ENCODE measurements at regions of chr7 and their contacts with region 1.

Region 1: DNA sequence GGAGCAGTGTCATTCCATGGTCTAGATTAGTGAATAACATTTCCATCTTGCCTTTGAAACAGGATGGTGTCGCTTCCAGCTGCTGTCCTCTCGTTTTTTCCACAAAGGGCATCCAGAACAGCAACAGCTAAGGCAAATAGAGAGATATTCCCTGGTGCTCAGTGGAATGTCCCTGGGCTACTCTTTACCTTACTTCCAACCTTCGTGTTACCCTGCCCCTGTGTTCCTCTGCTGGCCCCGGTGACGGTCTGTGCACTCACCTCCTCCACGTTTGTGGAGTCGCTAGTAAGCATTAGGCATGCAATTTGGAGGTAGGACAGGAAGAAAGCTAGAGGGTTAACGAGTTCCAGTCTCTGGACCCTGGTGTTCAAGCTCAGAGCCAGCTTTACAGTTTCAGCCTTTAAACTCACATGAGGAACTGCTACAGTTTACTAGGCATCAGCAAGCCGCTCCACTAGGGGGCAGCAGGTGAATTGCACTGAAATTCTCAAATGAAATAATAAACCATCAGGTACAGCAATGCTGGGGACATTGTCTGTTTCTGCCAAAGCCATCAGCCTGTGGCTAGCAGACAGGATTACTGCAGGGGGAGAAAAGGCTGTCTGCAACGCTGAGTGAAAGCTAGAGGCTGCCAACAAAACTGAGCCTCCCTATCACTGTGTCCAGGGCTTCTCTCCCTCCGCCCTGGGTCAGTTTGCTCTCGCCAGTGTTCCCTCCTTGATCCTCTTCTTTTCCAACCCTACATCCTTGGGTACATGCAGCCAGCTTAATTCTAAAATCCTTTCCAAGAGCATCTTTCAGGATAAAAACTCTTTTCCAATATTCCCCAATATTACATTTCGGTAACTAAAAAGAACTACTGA is 9.0 kb downstream of the MRPL32 start:
- DNase-seq: peak; percentile 78 to 96 (median 83)
- H3K4me3 ChIP-seq: no peak overlapping the region
- H3K27ac ChIP-seq: no peak overlapping the region
- H3K4me1 ChIP-seq: no peaks in the 10 kb centered on the region
- H3K27me3 ChIP-seq: no peaks in the 10 kb centered on the region
- CTCF ChIP-seq: peak; percentile 84 to 92 (median 87)
- POLR2A ChIP-seq: no peak

Region 2: GRCh38 chr7:42605406-42606192 is 335.6 kb before region 1 on chr7:
- intact Hi-C with region 1: no loop called
- DNase-seq: no peak
- H3K4me3 ChIP-seq: no peak overlapping the region
- H3K27ac ChIP-seq: no peak overlapping the region
- H3K4me1 ChIP-seq: no peaks in the 10 kb centered on the region
- H3K27me3 ChIP-seq: no peaks in the 10 kb centered on the region
- CTCF ChIP-seq: no peak
- POLR2A ChIP-seq: no peak

Region 3: DNA sequence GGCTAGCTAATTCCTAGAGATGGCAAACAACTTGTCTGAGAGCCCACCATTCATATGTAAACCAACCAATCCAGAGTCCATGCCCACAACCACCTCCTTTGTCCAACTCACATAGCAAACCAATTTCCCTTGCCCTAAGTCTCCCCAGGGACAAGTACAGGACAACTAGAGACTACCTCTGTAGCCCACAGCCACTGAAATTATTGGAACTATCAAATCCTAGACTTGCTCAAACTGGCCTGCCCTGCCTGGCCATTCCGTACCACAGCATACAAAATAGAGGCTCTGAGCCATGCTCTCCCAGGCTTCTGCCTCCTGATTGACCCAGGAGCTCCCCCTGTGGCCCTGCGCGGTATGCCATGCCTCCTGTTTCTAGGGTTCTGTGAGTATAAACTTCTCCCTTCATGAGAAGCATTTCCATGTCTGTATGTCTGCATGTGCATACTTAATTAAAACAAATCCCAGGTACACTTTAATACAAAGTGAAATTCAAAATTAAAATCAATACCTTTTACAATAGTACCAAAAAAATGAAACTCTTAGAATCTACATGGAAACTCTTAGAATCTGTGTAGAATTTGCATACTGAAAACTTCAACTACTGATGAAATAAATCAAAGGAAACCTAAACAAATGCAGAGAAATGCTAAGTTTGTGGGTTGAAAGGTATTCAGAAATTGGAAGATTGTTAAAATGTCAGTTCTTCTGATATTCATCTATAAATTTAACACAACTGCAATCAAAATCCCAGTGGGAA is 167.2 kb after region 1 on chr7:
- intact Hi-C with region 1: loop called (anchors 5 kb)
- DNase-seq: peak; percentile 72 to 88 (median 78)
- H3K4me3 ChIP-seq: no peak overlapping the region
- H3K27ac ChIP-seq: no peak overlapping the region
- H3K4me1 ChIP-seq: peaks cover 10% of the 10 kb centered on the region in 2 donors
- H3K27me3 ChIP-seq: peaks cover 33% of the 10 kb centered on the region
- CTCF ChIP-seq: peak; percentile 66 to 91 (median 78)
- POLR2A ChIP-seq: no peak

Region 4: GRCh38 chr7:43260980-43261878 is 320.0 kb after region 1 on chr7:
- intact Hi-C with region 1: loop called (anchors 5 kb)
- DNase-seq: peak; percentile 67 to 87 (median 74)
- H3K4me3 ChIP-seq: no peak overlapping the region
- H3K27ac ChIP-seq: no peak overlapping the region
- H3K4me1 ChIP-seq: no peaks in the 10 kb centered on the region
- H3K27me3 ChIP-seq: peaks cover 6% of the 10 kb centered on the region
- CTCF ChIP-seq: peak; percentile 71 to 95 (median 84)
- POLR2A ChIP-seq: no peak

Measured in adrenal gland (tissue), 19 donors.